Right lobe of liver (tissue), 6 donors: ENCODE measurements at regions of chr3 and their contacts with region 1.

Region 1: GRCh38 chr3:48465531-48466378 is 19.2 kb downstream of the ATRIP start:
- DNase-seq: peak; percentile 93 to 98 (median 97)
- ATAC-seq: peak; percentile 79 to 85 (median 82)
- H3K4me3 ChIP-seq: peak overlapping the region; percentile 37 to 55 (median 55)
- H3K27ac ChIP-seq: peak overlapping the region; percentile 92 to 99 (median 98)
- H3K4me1 ChIP-seq: peaks cover 2 to 58% (median 28%) of the 10 kb centered on the region in 4 donors
- H3K27me3 ChIP-seq: no peaks in the 10 kb centered on the region
- CTCF ChIP-seq: peak; percentile 79 to 90 (median 82)
- POLR2A ChIP-seq: peak; percentile 88

Region 2: GRCh38 chr3:48318783-48319468 is 146.8 kb before region 1 on chr3:
- intact Hi-C with region 1: no loop called
- DNase-seq: no peak
- ATAC-seq: no peak
- H3K4me3 ChIP-seq: no peak overlapping the region
- H3K27ac ChIP-seq: no peak overlapping the region
- H3K4me1 ChIP-seq: no peaks in the 10 kb centered on the region
- H3K27me3 ChIP-seq: no peaks in the 10 kb centered on the region
- CTCF ChIP-seq: no peak
- POLR2A ChIP-seq: no peak

Region 3: GRCh38 chr3:48504051-48504946 is 38.5 kb after region 1 on chr3 and contains the start of gene SHISA5:
- intact Hi-C with region 1: loop called in 1 of 2 experiments (anchors 5 kb)
- DNase-seq: peak; percentile 78 to 84 (median 79)
- ATAC-seq: peak; percentile 75 to 78 (median 76)
- H3K4me3 ChIP-seq: peak within 1 kb of the TSS; percentile 60 to 67 (median 62)
- H3K27ac ChIP-seq: peak within 1 kb of the TSS; percentile 73 to 90 (median 75)
- H3K4me1 ChIP-seq: peaks cover 0 to 10% (median 2%) of the 10 kb centered on the region in 4 donors
- H3K27me3 ChIP-seq: no peaks in the 10 kb centered on the region
- CTCF ChIP-seq: no peak
- POLR2A ChIP-seq: peak; percentile 46
- total RNA-seq, gene SHISA5: 76.3 to 118 (median 101) TPM

Region 4: DNA sequence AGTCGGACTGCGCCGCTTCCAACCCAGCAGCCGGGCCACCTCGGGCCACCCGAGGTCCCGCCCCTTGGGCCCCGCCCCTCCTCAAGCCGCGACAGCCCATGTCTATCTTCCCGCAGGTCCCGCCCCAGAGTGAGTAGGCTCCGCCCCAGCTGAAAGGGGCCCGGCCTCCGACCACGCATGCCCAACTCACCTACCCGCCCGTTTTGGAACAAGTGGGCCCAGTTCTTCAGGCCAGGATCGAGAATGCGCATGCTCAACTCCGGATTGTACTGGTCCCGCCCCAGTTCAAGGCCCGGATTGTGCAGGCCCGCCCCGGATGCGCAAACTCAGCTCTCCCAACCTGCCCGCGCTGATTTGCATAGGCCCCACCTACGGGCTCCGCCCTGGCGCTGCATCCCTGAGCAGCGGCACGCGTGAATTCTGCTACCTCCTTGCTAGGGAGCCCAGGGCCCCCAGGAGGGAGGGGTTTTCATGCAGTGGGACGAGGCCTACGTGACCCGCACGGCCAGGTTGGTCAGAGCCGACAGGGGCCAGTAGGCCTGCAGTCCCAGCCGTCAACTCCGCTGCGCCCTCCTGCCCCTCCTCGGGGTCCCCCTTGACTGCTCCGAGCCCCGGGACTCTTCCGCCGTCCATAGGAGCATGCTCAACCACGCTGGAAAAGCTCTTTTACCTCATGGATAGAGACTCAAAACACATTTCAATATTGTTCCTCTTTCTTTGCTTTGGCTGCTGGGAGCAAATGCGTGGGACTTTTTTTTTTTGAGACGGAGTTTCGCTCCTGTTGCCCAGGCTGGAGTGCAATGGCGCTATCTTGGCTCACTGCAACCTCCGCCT is 91.3 kb after region 1 on chr3 and contains the start of gene PFKFB4:
- intact Hi-C with region 1: loop called (anchors 5 kb)
- DNase-seq: peak; percentile 99 to 100 (median 99)
- ATAC-seq: peak; percentile 87 to 95 (median 92)
- H3K4me3 ChIP-seq: peak within 1 kb of the TSS; percentile 41 to 54 (median 52)
- H3K27ac ChIP-seq: peak within 1 kb of the TSS in 2 of 3 donors; percentile 7 to 38
- H3K4me1 ChIP-seq: peaks cover 0 to 11% (median 5%) of the 10 kb centered on the region in 4 donors
- H3K27me3 ChIP-seq: no peaks in the 10 kb centered on the region
- CTCF ChIP-seq: peak in 3 of 4 donors; percentile 7 to 24 (median 10)
- POLR2A ChIP-seq: no peak
- total RNA-seq, gene PFKFB4: 0.59 to 10.8 (median 1.4) TPM